ENCODE measurements at regions of chr14 and their contacts with region 1.

Region 1: DNA sequence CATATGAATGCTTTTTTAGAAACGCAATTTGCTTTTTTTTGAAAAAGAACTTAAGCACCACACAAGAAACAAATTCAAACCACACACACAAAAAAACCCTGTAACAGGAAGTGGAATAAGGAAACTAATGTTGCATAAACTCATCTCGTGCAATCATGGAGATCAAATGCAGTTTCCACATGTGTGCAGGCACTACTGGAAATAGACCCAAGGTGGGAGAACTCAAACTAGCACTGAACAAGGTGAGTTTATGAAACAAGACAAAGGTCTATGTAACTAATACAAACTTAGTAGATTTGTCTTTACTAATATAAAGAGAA is 17.5 kb downstream of the NIN start:
- DNase-seq: peak in 5 of 10 donors; percentile 32 to 78 (median 61)
- ATAC-seq: peak; percentile 90 to 94
- H3K4me3 Mint-ChIP-seq: peak overlapping the region; percentile 43 to 91 (median 83)
- H3K27ac Mint-ChIP-seq: peak overlapping the region; percentile 70 to 95 (median 89)
- H3K4me1 Mint-ChIP-seq: peaks cover 30 to 80% (median 69%) of the 10 kb centered on the region in 4 donors
- H3K27me3 Mint-ChIP-seq: no peaks in the 10 kb centered on the region

Region 2: GRCh38 chr14:50792051-50792477 is 21.4 kb before region 1 on chr14:
- POLR2A ChIA-PET with region 1: interaction called, 12 read pairs
- DNase-seq: peak in 5 of 10 donors; percentile 12 to 55 (median 46)
- ATAC-seq: peak; percentile 70
- H3K4me3 Mint-ChIP-seq: peak overlapping the region; percentile 68 to 88 (median 82)
- H3K27ac Mint-ChIP-seq: peak overlapping the region; percentile 88 to 99 (median 98)
- H3K4me1 Mint-ChIP-seq: peaks cover 45 to 99% (median 88%) of the 10 kb centered on the region in 4 donors
- H3K27me3 Mint-ChIP-seq: no peaks in the 10 kb centered on the region

Region 3: GRCh38 chr14:50855558-50855957 is 42.1 kb after region 1 on chr14:
- POLR2A ChIA-PET with region 1: no interaction called
- DNase-seq: no peak
- ATAC-seq: no peak
- H3K4me3 Mint-ChIP-seq: no peak overlapping the region
- H3K27ac Mint-ChIP-seq: peak overlapping the region in 1 of 10 donors; percentile 21
- H3K4me1 Mint-ChIP-seq: peaks cover 0 to 10% (median 7%) of the 10 kb centered on the region in 4 donors
- H3K27me3 Mint-ChIP-seq: no peaks in the 10 kb centered on the region

Measured in naive thymus-derived CD8-positive, alpha-beta T cell (primary cell).